Activated CD4-positive, alpha-beta T cell treated with anti-CD3 and anti-CD28 coated beads, Interleukin-2, amount 10 ng/mL, durations not matched to agents 7 days and 5 days (primary cell): ENCODE measurements at regions of chr4 and their contacts with region 1.

Region 1: DNA sequence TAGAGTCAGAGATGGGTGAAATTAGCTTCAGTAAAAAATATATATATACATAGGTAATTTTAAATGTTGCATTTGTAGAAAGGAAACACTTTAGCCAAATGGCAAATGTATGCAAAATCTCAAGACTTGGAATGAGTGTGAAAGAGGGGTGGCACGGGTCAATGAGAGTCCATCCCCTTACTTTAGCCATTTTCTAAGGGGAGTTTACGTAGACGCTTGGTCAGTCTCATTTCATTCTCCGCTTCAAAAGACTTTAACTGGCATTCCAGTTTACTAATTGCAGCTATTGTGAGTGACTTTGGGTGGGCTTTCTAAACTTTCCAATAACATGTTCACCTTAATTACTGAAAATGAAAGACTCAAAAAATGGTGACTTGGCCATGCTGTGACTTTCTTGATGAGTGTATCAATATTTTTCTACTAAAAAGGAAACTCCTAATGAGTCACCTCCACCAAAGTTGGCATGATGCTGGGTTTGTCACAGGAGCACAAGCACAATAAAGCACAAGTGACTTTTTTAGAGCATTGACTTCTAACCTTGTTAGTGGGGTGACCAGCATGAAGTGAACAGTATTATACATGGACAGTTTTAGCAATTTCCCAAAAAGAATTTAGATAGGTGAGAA is 356.0 kb upstream of the RASGEF1B start:
- DNase-seq: no peak
- H3K4me3 Mint-ChIP-seq: no peak overlapping the region
- H3K27ac Mint-ChIP-seq: no peak overlapping the region
- H3K4me1 Mint-ChIP-seq: peaks cover 8% of the 10 kb centered on the region
- H3K27me3 Mint-ChIP-seq: no peaks in the 10 kb centered on the region

Region 2: DNA sequence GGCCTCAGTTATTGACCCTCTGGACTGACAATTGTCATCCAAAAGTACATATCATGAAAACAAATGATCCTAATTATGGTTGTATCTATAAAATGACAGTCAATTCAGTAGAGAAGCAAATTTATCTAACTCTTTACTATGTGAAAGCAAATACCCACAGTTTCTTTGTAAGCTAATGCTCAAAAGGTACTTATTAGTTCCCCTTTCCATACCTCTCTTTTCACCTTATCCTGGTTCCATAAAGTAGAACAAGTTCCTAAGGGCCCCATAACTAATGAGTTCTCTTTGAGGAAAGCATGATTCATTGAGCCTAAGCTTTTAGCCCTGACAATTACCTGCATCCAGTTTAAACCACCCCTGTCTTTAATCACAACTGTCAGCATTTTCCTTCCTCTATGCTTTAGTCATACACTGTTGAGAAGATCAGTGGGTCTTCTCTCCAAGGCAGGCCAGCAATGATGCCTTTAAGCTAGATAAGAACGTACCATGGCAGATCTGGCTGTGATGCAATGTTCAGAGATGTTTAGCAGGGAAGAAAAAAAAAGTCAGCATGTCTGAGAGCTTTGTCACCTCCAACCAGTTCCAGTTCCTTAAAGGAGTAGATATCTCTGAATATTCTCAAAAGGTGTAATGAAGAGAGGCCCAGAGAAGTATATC is 176.3 kb before region 1 on chr4:
- CTCF ChIA-PET with region 1: no interaction called
- POLR2A ChIA-PET with region 1: no interaction called
- DNase-seq: no peak
- H3K4me3 Mint-ChIP-seq: no peak overlapping the region
- H3K27ac Mint-ChIP-seq: no peak overlapping the region
- H3K4me1 Mint-ChIP-seq: peaks cover 43% of the 10 kb centered on the region
- H3K27me3 Mint-ChIP-seq: no peaks in the 10 kb centered on the region

Region 3: GRCh38 chr4:81746071-81746470 is 81.6 kb before region 1 on chr4:
- CTCF ChIA-PET with region 1: no interaction called
- POLR2A ChIA-PET with region 1: interaction called, 11 read pairs
- DNase-seq: no peak
- H3K4me3 Mint-ChIP-seq: no peak overlapping the region
- H3K27ac Mint-ChIP-seq: no peak overlapping the region
- H3K4me1 Mint-ChIP-seq: peaks cover 6% of the 10 kb centered on the region
- H3K27me3 Mint-ChIP-seq: no peaks in the 10 kb centered on the region

Region 4: DNA sequence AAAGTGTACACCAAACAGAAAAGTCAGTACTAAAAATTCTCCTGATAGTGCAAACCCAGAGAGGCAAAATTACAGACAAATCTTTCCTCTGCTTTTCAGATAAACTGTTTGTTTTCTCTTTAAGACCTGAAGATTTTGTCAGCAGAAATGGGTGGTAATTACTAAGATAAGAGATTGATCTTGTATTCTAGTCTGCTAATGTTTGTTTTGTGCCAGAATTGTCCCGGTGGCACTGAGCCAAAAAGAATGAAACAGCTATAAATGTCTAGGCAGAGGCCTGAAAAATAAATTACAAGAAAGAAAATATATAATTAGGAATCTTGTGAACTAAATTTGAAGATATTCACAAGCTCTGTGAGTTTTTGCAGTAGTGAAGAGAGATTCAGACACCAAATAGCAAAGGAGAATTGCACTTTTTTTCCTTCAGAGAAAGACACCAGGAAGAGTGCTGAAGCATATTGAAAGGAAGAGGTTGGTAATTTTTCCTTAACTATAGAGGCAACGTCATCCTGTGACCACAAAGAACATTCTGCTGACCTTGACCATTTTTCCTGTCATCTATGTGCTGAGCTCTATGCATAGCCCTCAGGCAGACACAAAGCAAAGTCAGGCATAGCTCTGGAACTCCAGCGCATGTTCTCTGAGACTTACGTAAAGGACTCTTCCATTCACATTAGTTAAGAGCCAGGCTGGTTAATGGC is 41.5 kb before region 1 on chr4:
- CTCF ChIA-PET with region 1: no interaction called
- POLR2A ChIA-PET with region 1: interaction called, 10 read pairs
- DNase-seq: no peak
- H3K4me3 Mint-ChIP-seq: no peak overlapping the region
- H3K27ac Mint-ChIP-seq: no peak overlapping the region
- H3K4me1 Mint-ChIP-seq: peaks cover 7% of the 10 kb centered on the region
- H3K27me3 Mint-ChIP-seq: no peaks in the 10 kb centered on the region

Region 5: DNA sequence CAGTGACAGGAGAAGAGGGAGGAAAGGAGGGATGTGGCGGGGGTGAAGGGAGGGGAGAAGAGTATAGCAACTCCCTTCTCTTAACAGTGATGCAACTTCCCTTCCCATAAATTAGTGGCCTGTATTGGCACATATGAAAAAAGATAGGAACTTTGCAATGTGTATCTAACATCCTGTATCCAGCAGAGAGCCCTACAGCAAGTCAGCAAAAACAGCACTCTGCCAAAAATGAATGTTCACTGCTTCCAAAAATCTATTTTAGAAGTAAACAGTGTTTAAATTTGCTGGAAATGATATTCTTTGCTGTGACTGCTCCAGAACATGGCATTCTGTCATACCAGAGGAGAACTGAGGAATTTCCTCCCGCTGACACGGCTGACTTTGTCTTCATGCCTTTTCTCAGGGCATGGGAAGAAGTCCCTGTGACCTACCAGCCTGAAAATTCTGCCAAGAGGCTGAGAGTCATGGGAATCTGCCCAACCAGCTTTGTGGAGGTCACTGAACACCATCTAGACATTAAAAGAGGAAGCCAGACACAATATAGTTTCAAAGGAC is 12.6 kb before region 1 on chr4:
- CTCF ChIA-PET with region 1: no interaction called
- POLR2A ChIA-PET with region 1: no interaction called
- DNase-seq: no peak
- H3K4me3 Mint-ChIP-seq: no peak overlapping the region
- H3K27ac Mint-ChIP-seq: no peak overlapping the region
- H3K4me1 Mint-ChIP-seq: no peaks in the 10 kb centered on the region
- H3K27me3 Mint-ChIP-seq: peaks cover 5% of the 10 kb centered on the region